ENCODE measurements at regions of chr11 and their contacts with region 1.

Region 1: DNA sequence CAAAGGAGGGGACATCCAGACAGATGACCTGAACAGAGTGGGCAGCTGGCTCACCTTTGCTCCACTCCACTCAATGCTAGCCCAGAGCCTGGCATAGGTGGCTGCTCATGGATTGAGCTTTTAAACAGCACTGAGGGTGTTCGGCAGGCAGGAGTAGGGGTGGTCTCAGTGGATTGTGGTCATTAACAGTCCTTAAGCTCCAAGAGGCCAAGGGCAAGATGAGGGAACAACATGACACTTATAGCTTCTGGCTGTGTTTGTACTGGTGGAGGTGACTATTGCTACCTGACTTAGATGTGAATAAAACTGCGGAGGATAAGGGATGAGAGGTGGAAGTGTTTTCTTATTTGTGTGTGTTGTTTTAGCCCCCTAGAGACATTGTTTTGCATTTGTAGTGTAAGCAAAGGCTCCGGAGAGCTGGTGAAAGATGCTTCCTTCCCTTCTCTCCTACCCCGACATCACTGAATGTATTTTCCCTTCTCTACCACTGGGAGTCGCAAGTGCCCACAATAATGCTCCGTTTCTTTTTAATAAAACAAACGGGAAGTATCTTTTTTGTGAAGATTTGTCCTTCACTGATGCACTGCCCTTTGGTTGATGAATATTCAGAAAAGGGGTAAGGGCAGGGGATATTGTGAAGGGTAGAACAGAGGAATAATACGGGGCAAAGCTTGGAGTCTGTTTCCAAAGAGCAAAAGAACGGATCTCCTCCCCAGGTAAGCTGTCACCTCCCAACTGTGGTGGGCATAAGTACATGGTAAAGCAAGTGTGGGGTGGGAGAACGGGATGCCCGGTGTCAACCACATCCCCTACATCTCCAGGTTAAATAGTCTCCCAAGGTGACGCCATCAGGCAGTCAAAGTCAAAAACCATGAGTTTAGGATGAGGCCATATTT is 27.5 kb upstream of the MTNR1B start:
- DNase-seq: peak; percentile 50
- ATAC-seq: peak; percentile 94
- H3K4me3 ChIP-seq: no peak overlapping the region
- H3K27ac ChIP-seq: no peak overlapping the region
- H3K4me1 ChIP-seq: no peaks in the 10 kb centered on the region
- H3K27me3 ChIP-seq: no peaks in the 10 kb centered on the region
- CTCF ChIP-seq: peak; percentile 88
- POLR2A ChIP-seq: no peak
- RAD21 ChIP-seq: peak; percentile 94

Region 2: GRCh38 chr11:93054881-93055280 is 113.0 kb after region 1 on chr11:
- CTCF ChIA-PET with region 1: interaction called, 6 read pairs
- POLR2A ChIA-PET with region 1: no interaction called
- dilution Hi-C with region 1: no loop called
- in situ Hi-C with region 1: no loop called
- intact Hi-C with region 1: loop called (anchors 2 kb)
- DNase-seq: peak; percentile 99
- ATAC-seq: peak; percentile 72
- H3K4me3 ChIP-seq: no peak overlapping the region
- H3K27ac ChIP-seq: peak overlapping the region; percentile 86
- H3K4me1 ChIP-seq: peaks cover 29% of the 10 kb centered on the region
- H3K27me3 ChIP-seq: no peaks in the 10 kb centered on the region
- CTCF ChIP-seq: no peak
- POLR2A ChIP-seq: no peak
- RAD21 ChIP-seq: no peak; the same call in 1 of the 2 replicates

Region 3: GRCh38 chr11:93089474-93090102 is 147.7 kb after region 1 on chr11:
- CTCF ChIA-PET with region 1: no interaction called
- POLR2A ChIA-PET with region 1: no interaction called
- dilution Hi-C with region 1: no loop called
- in situ Hi-C with region 1: no loop called
- intact Hi-C with region 1: loop called (anchors 1 kb)
- DNase-seq: peak; percentile 62
- ATAC-seq: peak; percentile 95
- H3K4me3 ChIP-seq: no peak overlapping the region
- H3K27ac ChIP-seq: no peak overlapping the region
- H3K4me1 ChIP-seq: no peaks in the 10 kb centered on the region
- H3K27me3 ChIP-seq: no peaks in the 10 kb centered on the region
- CTCF ChIP-seq: peak; percentile 51
- POLR2A ChIP-seq: no peak
- RAD21 ChIP-seq: peak; percentile 51

Region 4: GRCh38 chr11:93169950-93170561 is 228.1 kb after region 1 on chr11:
- CTCF ChIA-PET with region 1: interaction called, 4 read pairs
- POLR2A ChIA-PET with region 1: no interaction called
- dilution Hi-C with region 1: no loop called
- in situ Hi-C with region 1: loop called (anchors 5 kb)
- intact Hi-C with region 1: loop called (anchors 1 kb)
- DNase-seq: peak; percentile 62
- ATAC-seq: peak; percentile 65
- H3K4me3 ChIP-seq: no peak overlapping the region
- H3K27ac ChIP-seq: no peak overlapping the region
- H3K4me1 ChIP-seq: no peaks in the 10 kb centered on the region
- H3K27me3 ChIP-seq: no peaks in the 10 kb centered on the region
- CTCF ChIP-seq: peak; percentile 64
- POLR2A ChIP-seq: no peak
- RAD21 ChIP-seq: peak; percentile 73

Region 5: GRCh38 chr11:93225662-93226061 is 283.7 kb after region 1 on chr11:
- CTCF ChIA-PET with region 1: interaction called, 7 read pairs
- POLR2A ChIA-PET with region 1: no interaction called
- dilution Hi-C with region 1: no loop called
- in situ Hi-C with region 1: loop called (anchors 5 kb)
- intact Hi-C with region 1: loop called (anchors 2 kb)
- DNase-seq: peak; percentile 16
- ATAC-seq: peak; percentile 51
- H3K4me3 ChIP-seq: no peak overlapping the region
- H3K27ac ChIP-seq: no peak overlapping the region
- H3K4me1 ChIP-seq: no peaks in the 10 kb centered on the region
- H3K27me3 ChIP-seq: peaks cover 2% of the 10 kb centered on the region; the same call in 1 of the 2 replicates
- CTCF ChIP-seq: peak; percentile 52
- POLR2A ChIP-seq: no peak
- RAD21 ChIP-seq: peak; percentile 59

Region 6: GRCh38 chr11:93543292-93543977 is 601.5 kb after region 1 on chr11 and contains the start of gene SMCO4:
- CTCF ChIA-PET with region 1: no interaction called
- POLR2A ChIA-PET with region 1: no interaction called
- dilution Hi-C with region 1: no loop called
- in situ Hi-C with region 1: no loop called
- intact Hi-C with region 1: loop called (anchors 2 kb)
- DNase-seq: peak; percentile 66
- ATAC-seq: peak; percentile 95
- H3K4me3 ChIP-seq: peak within 1 kb of the TSS; percentile 57
- H3K27ac ChIP-seq: no peak within 1 kb of the TSS; the same call in 1 of the 2 replicates
- H3K4me1 ChIP-seq: peaks cover 2% of the 10 kb centered on the region; the same call in 1 of the 2 replicates
- H3K27me3 ChIP-seq: peaks cover 17% of the 10 kb centered on the region
- CTCF ChIP-seq: peak; percentile 85
- POLR2A ChIP-seq: peak; percentile 45; the same call in 1 of the 2 replicates
- RAD21 ChIP-seq: peak; percentile 81
- total RNA-seq, gene SMCO4: 2.2 and 4.2 TPM in 2 replicates

Region 7: GRCh38 chr11:93652161-93652597 is 710.3 kb after region 1 on chr11:
- CTCF ChIA-PET with region 1: no interaction called
- POLR2A ChIA-PET with region 1: no interaction called
- dilution Hi-C with region 1: no loop called
- in situ Hi-C with region 1: loop called (anchors 25 kb)
- intact Hi-C with region 1: loop called (anchors 5 kb)
- DNase-seq: peak; percentile 44
- ATAC-seq: peak; percentile 56; the same call in 1 of the 2 replicates
- H3K4me3 ChIP-seq: no peak overlapping the region
- H3K27ac ChIP-seq: no peak overlapping the region
- H3K4me1 ChIP-seq: no peaks in the 10 kb centered on the region
- H3K27me3 ChIP-seq: peaks cover 26% of the 10 kb centered on the region
- CTCF ChIP-seq: peak; percentile 76
- POLR2A ChIP-seq: no peak
- RAD21 ChIP-seq: peak; percentile 56

Measured in IMR-90 (cell line).